ENCODE measurements at regions of chr17 and their contacts with region 1.

Region 1: GRCh38 chr17:31645351-31645750 is 213.7 kb downstream of the COPRS start:
- DNase-seq: no peak
- ATAC-seq: no peak
- H3K4me3 ChIP-seq: no peak overlapping the region
- H3K27ac ChIP-seq: no peak overlapping the region
- H3K4me1 ChIP-seq: no peaks in the 10 kb centered on the region
- H3K27me3 ChIP-seq: no peaks in the 10 kb centered on the region
- CTCF ChIP-seq: no peak
- POLR2A ChIP-seq: no peak
- RAD21 ChIP-seq: no peak

Region 2: DNA sequence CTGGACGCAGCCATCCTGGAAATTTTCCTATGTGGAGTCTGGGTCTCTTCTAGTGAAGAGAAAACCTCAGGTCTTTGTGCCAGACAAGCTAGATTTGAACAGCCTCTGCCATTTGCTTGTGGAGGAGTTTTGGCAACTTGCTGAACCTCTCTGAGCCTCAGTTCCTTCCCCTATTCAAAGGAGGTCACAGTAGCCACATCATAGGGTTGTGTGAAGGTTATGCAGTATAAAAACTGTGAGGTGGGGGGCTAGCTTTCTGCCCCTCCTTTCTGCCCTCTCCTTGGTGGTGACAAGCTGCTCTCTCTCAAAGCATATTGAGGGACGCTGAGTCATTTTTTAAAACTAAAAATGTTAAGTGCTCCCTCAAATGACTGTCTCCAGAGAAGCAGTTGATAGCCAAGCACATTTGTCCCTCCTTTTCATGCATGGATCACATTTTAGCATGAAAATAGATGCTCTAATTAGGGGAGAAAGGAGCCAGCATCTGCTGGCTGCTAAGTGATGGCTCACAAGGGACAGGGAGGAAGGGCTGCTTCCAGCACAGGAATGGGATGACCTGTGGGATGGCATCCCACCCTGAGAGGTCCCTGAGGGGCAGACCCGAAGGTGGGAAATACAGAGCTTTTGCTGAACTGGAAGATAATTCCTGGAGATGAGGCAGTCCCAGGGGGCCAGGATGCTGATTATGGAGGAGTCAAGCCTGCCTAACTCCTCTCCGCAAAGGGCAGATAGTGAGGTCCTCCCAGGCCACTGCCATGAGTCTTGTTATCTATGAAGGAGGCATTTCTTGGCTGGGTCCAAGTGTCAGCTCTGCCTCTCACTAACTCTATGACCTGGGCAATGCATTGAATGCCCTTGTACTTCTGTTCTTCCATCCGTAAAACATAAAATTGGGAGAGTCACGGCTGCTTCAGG is 35.1 kb before region 1 on chr17:
- CTCF ChIA-PET with region 1: no interaction called
- POLR2A ChIA-PET with region 1: no interaction called
- dilution Hi-C with region 1: no loop called
- in situ Hi-C with region 1: no loop called
- intact Hi-C with region 1: no loop called
- DNase-seq: no peak
- ATAC-seq: no peak
- H3K4me3 ChIP-seq: no peak overlapping the region
- H3K27ac ChIP-seq: no peak overlapping the region
- H3K4me1 ChIP-seq: no peaks in the 10 kb centered on the region
- H3K27me3 ChIP-seq: no peaks in the 10 kb centered on the region
- CTCF ChIP-seq: no peak
- POLR2A ChIP-seq: no peak
- RAD21 ChIP-seq: no peak

Region 3: GRCh38 chr17:31629696-31630470 is 15.5 kb before region 1 on chr17:
- CTCF ChIA-PET with region 1: no interaction called
- POLR2A ChIA-PET with region 1: no interaction called
- dilution Hi-C with region 1: no loop called
- in situ Hi-C with region 1: no loop called
- intact Hi-C with region 1: no loop called
- DNase-seq: peak; percentile 71
- ATAC-seq: peak; percentile 9; the same call in 1 of the 2 replicates
- H3K4me3 ChIP-seq: no peak overlapping the region
- H3K27ac ChIP-seq: peak overlapping the region; percentile 46; the same call in 1 of the 2 replicates
- H3K4me1 ChIP-seq: peaks cover 8% of the 10 kb centered on the region
- H3K27me3 ChIP-seq: no peaks in the 10 kb centered on the region
- CTCF ChIP-seq: no peak
- POLR2A ChIP-seq: no peak
- RAD21 ChIP-seq: no peak

Region 4: DNA sequence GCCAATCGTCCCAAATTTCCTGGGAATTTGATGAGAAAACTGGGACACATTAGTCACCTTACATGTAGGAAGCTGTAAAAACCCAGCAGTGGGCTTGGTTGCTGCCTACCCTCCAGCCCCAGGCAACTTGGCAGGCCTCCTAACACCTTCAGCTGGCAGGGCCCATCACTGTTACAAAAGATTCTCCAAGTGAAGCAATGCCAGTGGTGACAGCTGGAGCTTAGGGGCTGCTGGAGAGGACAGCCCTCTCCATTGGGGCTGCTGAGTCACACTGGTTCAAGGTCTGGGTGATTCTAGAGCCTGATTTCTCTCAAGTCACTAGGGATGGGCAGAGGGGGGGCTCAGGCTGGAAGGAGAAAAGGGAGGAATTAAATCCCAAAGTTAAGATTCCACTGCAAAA is 33.1 kb after region 1 on chr17:
- CTCF ChIA-PET with region 1: no interaction called
- POLR2A ChIA-PET with region 1: no interaction called
- dilution Hi-C with region 1: no loop called
- in situ Hi-C with region 1: no loop called
- intact Hi-C with region 1: loop called (anchors 5 kb)
- DNase-seq: peak; percentile 41
- ATAC-seq: peak; percentile 66
- H3K4me3 ChIP-seq: no peak overlapping the region
- H3K27ac ChIP-seq: no peak overlapping the region
- H3K4me1 ChIP-seq: peaks cover 7% of the 10 kb centered on the region
- H3K27me3 ChIP-seq: no peaks in the 10 kb centered on the region
- CTCF ChIP-seq: no peak
- POLR2A ChIP-seq: no peak
- RAD21 ChIP-seq: no peak

Measured in IMR-90 (cell line).